WTC11 (cell line): ENCODE measurements at regions of chr17 and their contacts with region 1.

Region 1: GRCh38 chr17:4789901-4790704 is 1.3 kb downstream of the GLTPD2 start:
- DNase-seq: peak; percentile 71
- ATAC-seq: peak; percentile 65
- H3K4me3 Mint-ChIP-seq: peak overlapping the region; percentile 80
- H3K27ac Mint-ChIP-seq: no peak overlapping the region
- H3K4me1 Mint-ChIP-seq: peaks cover 33% of the 10 kb centered on the region
- H3K27me3 Mint-ChIP-seq: peaks cover 55% of the 10 kb centered on the region
- CTCF ChIP-seq: peak; percentile 20; the same call in 1 of the 2 replicates

Region 2: GRCh38 chr17:4709794-4710692 is 80.1 kb before region 1 on chr17 and contains the start of gene ARRB2:
- CTCF ChIA-PET with region 1: interaction called, 15 read pairs
- POLR2A ChIA-PET with region 1: interaction called, 4 read pairs
- DNase-seq: peak; percentile 95
- ATAC-seq: peak; percentile 85
- H3K4me3 Mint-ChIP-seq: peak within 1 kb of the TSS; percentile 82
- H3K27ac Mint-ChIP-seq: peak within 1 kb of the TSS; percentile 98
- H3K4me1 Mint-ChIP-seq: peaks cover 30% of the 10 kb centered on the region
- H3K27me3 Mint-ChIP-seq: peaks cover 7% of the 10 kb centered on the region
- CTCF ChIP-seq: no peak
- total RNA-seq, gene ARRB2: 79.7 to 87.8 TPM (median 81.0 TPM) in 3 replicates

Region 3: DNA sequence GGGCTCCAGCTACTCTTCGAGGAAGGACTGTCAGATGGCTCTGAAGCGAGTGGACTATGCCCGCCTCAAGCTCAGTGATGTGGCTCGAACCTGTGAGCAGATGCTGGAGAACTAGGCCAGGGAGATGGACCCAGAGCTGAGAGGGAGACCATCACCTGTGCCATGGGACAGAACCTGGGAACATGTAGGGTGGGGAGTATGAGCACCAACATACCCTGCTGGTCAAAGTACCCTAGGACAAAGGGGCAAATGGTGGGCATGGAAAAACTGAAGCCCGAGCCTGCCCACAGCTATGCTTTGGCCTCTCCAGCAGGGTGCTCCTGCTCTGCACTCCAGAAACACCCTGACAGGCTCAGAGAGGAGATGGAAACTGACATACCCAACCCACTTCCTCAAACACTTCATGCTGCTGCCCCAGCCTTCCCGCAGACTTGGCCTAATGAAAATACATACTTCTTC is 57.0 kb before region 1 on chr17:
- CTCF ChIA-PET with region 1: interaction called, 21 read pairs
- POLR2A ChIA-PET with region 1: no interaction called
- DNase-seq: no peak
- ATAC-seq: no peak
- H3K4me3 Mint-ChIP-seq: no peak overlapping the region
- H3K27ac Mint-ChIP-seq: no peak overlapping the region
- H3K4me1 Mint-ChIP-seq: peaks cover 4% of the 10 kb centered on the region
- H3K27me3 Mint-ChIP-seq: peaks cover 31% of the 10 kb centered on the region
- CTCF ChIP-seq: no peak

Region 4: DNA sequence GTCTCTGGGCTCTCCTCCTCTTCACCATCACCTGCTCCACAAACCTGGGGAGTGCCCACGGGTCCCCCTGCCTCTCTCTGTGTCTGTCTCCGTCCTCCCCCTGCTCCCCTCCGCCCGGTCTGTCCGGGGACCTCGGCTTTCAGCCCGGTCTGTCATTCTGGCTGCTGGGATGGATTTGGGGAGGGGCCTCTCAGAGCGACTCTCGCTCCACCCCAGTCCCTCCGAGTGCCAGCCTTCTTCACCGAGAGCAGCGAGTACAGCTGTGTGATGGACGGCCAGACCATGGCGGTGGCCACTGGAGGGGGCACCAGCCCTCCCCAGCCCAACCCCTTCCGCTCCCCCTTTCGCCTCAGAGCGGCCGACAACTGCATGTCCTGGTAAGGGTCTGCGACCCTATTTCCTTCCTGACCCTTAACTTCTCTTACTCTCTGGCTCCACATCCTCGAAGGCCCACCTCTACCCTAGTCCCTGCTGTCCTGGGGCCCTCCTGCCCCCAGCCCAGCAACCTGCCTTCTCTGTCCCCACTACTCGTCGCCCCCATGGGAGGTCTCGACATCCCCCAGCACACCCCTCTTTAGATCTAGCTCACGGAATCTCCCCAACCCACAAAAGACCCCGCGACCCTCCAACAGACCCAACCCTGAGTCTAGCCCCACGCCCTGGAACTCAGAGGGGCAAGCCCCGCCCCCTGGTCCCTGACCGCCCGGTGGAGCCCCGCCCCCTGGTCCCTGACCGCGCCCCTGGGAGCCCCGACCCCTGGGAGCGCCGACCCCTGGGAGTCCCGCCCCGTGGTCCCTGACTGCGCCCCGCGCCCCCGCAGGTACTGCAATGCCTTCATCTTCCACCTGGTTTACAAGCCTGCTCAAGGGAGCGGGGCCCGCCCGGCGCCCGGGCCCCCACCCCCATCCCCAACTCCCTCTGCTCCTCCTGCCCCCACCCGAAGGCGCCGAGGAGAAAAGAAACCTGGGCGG is 44.8 kb before region 1 on chr17:
- CTCF ChIA-PET with region 1: interaction called, 13 read pairs
- POLR2A ChIA-PET with region 1: no interaction called
- DNase-seq: peak; percentile 77
- ATAC-seq: peak; percentile 95
- H3K4me3 Mint-ChIP-seq: peak overlapping the region; percentile 92
- H3K27ac Mint-ChIP-seq: peak overlapping the region; percentile 72; the same call in 1 of the 2 replicates
- H3K4me1 Mint-ChIP-seq: peaks cover 26% of the 10 kb centered on the region
- H3K27me3 Mint-ChIP-seq: peaks cover 41% of the 10 kb centered on the region
- CTCF ChIP-seq: no peak

Region 5: GRCh38 chr17:4777969-4778761 is 11.9 kb before region 1 on chr17:
- CTCF ChIA-PET with region 1: interaction called, 13 read pairs
- POLR2A ChIA-PET with region 1: no interaction called
- DNase-seq: no peak
- ATAC-seq: no peak
- H3K4me3 Mint-ChIP-seq: no peak overlapping the region
- H3K27ac Mint-ChIP-seq: no peak overlapping the region
- H3K4me1 Mint-ChIP-seq: no peaks in the 10 kb centered on the region
- H3K27me3 Mint-ChIP-seq: peaks cover 18% of the 10 kb centered on the region
- CTCF ChIP-seq: no peak

Region 6: DNA sequence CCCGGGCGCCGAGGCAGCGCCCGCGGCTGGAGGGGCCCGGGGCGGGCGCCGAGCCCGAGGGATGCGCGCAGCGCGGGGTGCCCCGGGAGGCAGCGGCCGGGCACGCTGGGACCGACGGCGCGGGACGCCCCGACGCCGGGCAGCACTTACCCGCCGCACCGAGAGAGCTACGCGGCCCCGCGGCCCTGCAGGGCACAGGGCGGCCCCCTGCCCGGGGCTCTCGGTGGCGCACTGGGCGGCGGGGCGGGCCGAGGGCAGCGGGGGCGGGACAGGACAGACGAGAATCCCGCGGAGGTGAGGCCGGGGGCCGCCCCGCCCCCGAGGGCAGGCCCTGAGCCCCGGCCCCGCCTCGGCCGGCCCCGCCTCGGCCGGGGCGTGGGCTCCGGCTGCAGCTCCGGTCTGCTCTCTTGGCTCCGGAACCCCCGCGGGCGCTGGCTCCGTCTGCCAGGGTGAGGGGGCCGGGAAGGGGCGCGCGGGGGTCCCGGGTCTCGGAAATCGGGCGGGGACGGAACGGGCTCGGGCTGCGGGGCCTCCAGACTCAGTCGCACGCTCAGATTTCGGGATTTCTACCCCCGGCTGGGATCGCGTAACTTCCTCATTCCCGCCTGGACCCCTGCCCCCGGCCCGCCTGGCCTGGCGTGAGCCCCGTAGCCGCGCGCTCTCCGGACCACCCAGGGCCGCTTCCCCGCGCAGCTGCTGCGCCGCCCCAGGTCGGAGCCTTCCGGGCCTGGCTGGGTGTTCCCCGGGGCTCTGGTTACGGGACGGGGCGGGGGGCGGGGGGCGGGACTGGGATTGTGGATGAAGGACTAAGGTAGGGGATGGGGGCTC is 16.9 kb after region 1 on chr17 and contains the start of gene PLD2:
- CTCF ChIA-PET with region 1: interaction called, 27 read pairs
- POLR2A ChIA-PET with region 1: interaction called, 12 read pairs
- DNase-seq: peak; percentile 85
- ATAC-seq: peak; percentile 95
- H3K4me3 Mint-ChIP-seq: peak within 1 kb of the TSS; percentile 89
- H3K27ac Mint-ChIP-seq: peak within 1 kb of the TSS; percentile 36; the same call in 1 of the 2 replicates
- H3K4me1 Mint-ChIP-seq: peaks cover 10% of the 10 kb centered on the region
- H3K27me3 Mint-ChIP-seq: peaks cover 4% of the 10 kb centered on the region; the same call in 1 of the 2 replicates
- CTCF ChIP-seq: no peak
- total RNA-seq, gene PLD2: 51.3 to 64.9 TPM (median 52.1 TPM) in 3 replicates

Region 7: DNA sequence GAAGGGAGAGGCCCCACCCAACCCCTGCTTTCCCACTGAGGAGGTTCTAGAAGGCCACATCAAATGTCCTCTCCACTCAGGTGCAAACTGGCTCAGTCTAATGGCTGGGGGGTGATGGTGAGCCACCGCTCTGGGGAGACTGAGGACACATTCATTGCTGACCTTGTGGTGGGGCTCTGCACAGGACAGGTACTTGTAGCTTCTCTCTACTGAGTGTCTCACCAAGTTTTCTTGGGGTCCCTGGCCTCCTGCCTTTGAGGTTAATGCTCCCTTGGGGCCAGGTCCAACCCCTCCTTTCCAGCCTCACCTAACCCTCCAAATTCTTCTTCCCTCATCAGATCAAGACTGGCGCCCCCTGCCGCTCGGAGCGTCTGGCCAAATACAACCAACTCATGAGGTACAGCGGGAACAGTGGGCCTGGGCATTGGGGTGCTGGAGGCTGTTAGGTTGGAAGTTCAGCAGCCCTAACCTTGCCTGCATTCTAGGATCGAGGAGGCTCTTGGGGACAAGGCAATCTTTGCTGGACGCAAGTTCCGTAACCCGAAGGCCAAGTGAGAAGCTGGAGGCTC is 166.5 kb after region 1 on chr17:
- CTCF ChIA-PET with region 1: no interaction called
- POLR2A ChIA-PET with region 1: no interaction called
- DNase-seq: peak; percentile 83
- ATAC-seq: peak; percentile 64
- H3K4me3 Mint-ChIP-seq: no peak overlapping the region
- H3K27ac Mint-ChIP-seq: no peak overlapping the region
- H3K4me1 Mint-ChIP-seq: peaks cover 35% of the 10 kb centered on the region
- H3K27me3 Mint-ChIP-seq: no peaks in the 10 kb centered on the region
- CTCF ChIP-seq: peak; percentile 53

Region 8: GRCh38 chr17:5078106-5079028 is 288.3 kb after region 1 on chr17 and contains the start of gene ZFP3:
- CTCF ChIA-PET with region 1: no interaction called
- POLR2A ChIA-PET with region 1: no interaction called
- DNase-seq: peak; percentile 58
- ATAC-seq: peak; percentile 76
- H3K4me3 Mint-ChIP-seq: peak within 1 kb of the TSS; percentile 63
- H3K27ac Mint-ChIP-seq: peak within 1 kb of the TSS; percentile 20; the same call in 1 of the 2 replicates
- H3K4me1 Mint-ChIP-seq: peaks cover 15% of the 10 kb centered on the region
- H3K27me3 Mint-ChIP-seq: peaks cover 43% of the 10 kb centered on the region
- CTCF ChIP-seq: no peak
- total RNA-seq, gene ZFP3: 0.39 to 0.71 TPM (median 0.66 TPM) in 3 replicates